ENCODE measurements at regions of chr2 and their contacts with region 1.

Region 1: GRCh38 chr2:182980115-182980514 is 58.1 kb downstream of the NCKAP1 start:
- DNase-seq: peak; percentile 76
- H3K4me3 ChIP-seq: no peak overlapping the region
- H3K27ac ChIP-seq: no peak overlapping the region
- H3K4me1 ChIP-seq: peaks cover 26% of the 10 kb centered on the region
- CTCF ChIP-seq: peak; percentile 94

Region 2: DNA sequence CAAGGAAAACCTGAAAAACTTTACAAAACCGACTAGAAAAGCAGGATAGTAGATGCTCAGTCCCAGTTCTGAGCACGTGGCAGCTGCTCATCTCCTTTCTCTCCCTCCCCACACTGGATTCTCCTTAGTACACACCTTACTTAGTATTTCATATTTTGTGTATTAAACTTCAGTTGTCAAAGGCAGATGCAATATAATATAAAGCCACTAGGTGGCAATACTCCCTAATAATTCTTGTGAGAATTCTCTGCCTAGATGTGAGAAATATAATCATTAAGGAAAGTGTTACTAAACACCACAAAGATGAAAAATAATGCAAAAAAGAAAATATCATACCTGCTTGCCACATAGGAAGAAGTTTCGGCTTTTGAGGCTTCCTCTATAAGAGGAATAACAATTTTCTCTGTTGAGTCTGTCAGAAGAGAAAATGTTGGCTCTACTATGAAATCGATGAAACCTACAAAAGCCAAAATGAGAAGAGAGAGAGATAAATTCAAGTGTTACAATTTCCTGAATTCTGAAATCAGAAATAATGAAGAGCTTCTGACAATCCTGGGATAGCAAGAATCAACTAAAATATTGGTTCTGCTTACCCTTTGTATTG is 793.9 kb before region 1 on chr2:
- CTCF ChIA-PET with region 1: no interaction called
- POLR2A ChIA-PET with region 1: no interaction called
- intact Hi-C with region 1: loop called (anchors 5 kb)
- DNase-seq: peak; percentile 46
- H3K4me3 ChIP-seq: no peak overlapping the region
- H3K27ac ChIP-seq: no peak overlapping the region
- H3K4me1 ChIP-seq: no peaks in the 10 kb centered on the region
- CTCF ChIP-seq: peak; percentile 91

Region 3: DNA sequence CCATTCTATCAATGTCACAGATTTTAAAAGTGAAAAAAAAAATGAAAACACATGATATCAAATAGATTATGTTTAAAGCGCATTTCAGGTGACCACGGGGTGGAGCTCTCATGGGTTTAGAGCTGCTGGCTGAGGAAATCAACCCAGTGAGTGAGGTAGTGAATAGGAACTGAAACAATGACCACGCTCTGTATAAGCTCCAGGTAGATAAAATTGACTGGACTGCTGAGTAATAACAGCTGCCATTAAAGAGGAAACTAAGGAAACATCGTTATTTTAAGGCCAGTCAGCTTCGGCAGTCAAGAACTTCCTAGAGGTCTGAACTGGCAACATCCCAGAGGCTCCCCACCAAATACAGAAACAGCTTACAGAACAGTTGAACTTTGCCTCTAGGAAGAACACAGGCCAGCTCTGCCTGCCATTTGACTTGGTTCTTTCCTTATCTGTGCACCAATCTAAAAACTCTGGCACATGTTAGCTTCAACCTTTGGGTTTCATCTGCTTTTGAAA is 739.2 kb before region 1 on chr2:
- CTCF ChIA-PET with region 1: no interaction called
- POLR2A ChIA-PET with region 1: no interaction called
- intact Hi-C with region 1: loop called (anchors 1 kb)
- DNase-seq: peak; percentile 54
- H3K4me3 ChIP-seq: no peak overlapping the region
- H3K27ac ChIP-seq: no peak overlapping the region
- H3K4me1 ChIP-seq: no peaks in the 10 kb centered on the region
- CTCF ChIP-seq: peak; percentile 89

Region 4: GRCh38 chr2:182666674-182667314 is 313.3 kb before region 1 on chr2:
- CTCF ChIA-PET with region 1: no interaction called
- POLR2A ChIA-PET with region 1: interaction called, 7 read pairs
- intact Hi-C with region 1: loop called (anchors 2 kb)
- DNase-seq: peak; percentile 52
- H3K4me3 ChIP-seq: no peak overlapping the region
- H3K27ac ChIP-seq: no peak overlapping the region
- H3K4me1 ChIP-seq: no peaks in the 10 kb centered on the region
- CTCF ChIP-seq: peak; percentile 86

Region 5: GRCh38 chr2:182763311-182763912 is 216.7 kb before region 1 on chr2:
- CTCF ChIA-PET with region 1: interaction called, 8 read pairs
- POLR2A ChIA-PET with region 1: interaction called, 5 read pairs
- intact Hi-C with region 1: loop called (anchors 1 kb)
- DNase-seq: peak; percentile 63
- H3K4me3 ChIP-seq: no peak overlapping the region
- H3K27ac ChIP-seq: no peak overlapping the region
- H3K4me1 ChIP-seq: no peaks in the 10 kb centered on the region
- CTCF ChIP-seq: peak; percentile 80

Region 6: DNA sequence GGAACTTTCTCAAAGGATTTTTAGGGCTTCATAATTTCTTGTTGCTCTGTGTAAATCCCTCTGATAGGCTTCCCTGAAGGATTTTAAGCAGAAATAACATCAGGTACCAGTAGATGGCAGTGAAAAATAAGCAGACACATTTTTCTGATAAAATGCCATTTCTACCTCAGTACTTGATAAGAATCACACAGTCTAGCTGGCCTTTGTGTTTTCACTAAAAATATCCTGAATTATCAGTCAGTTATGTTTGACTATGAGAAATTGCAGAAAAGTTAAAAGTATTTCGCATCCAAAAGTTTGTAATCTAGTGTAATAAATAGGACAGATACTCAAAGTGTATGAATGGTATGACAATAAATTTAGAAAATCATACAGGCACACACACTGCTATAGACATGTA is 195.3 kb before region 1 on chr2:
- CTCF ChIA-PET with region 1: interaction called, 3 read pairs
- POLR2A ChIA-PET with region 1: interaction called, 5 read pairs
- intact Hi-C with region 1: loop called (anchors 1 kb)
- DNase-seq: peak; percentile 57
- H3K4me3 ChIP-seq: no peak overlapping the region
- H3K27ac ChIP-seq: no peak overlapping the region
- H3K4me1 ChIP-seq: no peaks in the 10 kb centered on the region
- CTCF ChIP-seq: peak; percentile 90

Region 7: DNA sequence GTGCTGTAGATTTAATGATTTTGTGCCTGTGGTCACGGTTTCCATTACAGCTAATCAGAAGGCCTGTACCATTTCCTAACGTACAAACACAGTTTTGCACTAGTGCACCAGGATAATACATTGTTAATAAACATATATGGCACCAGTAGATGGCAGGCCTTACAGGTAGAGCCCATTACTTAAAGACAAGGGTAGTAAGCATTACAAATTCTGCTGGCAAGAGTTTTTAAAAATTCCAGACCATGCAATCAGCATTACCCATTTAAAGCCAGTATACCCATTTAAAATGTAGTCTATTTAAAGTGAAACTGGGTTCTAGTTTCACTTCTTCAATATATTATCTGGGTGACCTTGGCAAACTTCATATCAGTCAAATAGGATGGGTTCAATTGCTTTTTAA is 368.4 kb after region 1 on chr2:
- CTCF ChIA-PET with region 1: no interaction called
- POLR2A ChIA-PET with region 1: no interaction called
- intact Hi-C with region 1: no loop called
- DNase-seq: peak; percentile 20
- H3K4me3 ChIP-seq: no peak overlapping the region
- H3K27ac ChIP-seq: no peak overlapping the region
- H3K4me1 ChIP-seq: peaks cover 27% of the 10 kb centered on the region
- CTCF ChIP-seq: peak; percentile 55

Measured in OCI-LY7 (cell line).